Dorsolateral prefrontal cortex (tissue), 120 donors: ENCODE measurements at regions of chr18 and their contacts with region 1.

Region 1: GRCh38 chr18:4106407-4107033 is 348.6 kb downstream of the DLGAP1 start:
- DNase-seq: peak; percentile 61 to 88 (median 72)
- H3K4me3 ChIP-seq: peak overlapping the region; percentile 6 to 62 (median 46)
- H3K27ac ChIP-seq: peak overlapping the region in 34 of 59 donors; percentile 1 to 72 (median 46)
- H3K27me3 ChIP-seq: no peaks in the 10 kb centered on the region
- CTCF ChIP-seq: peak; percentile 82 to 97 (median 90)

Region 2: GRCh38 chr18:4236940-4237663 is 130.6 kb after region 1 on chr18:
- intact Hi-C with region 1: no loop called
- DNase-seq: no peak
- H3K4me3 ChIP-seq: no peak overlapping the region
- H3K27ac ChIP-seq: no peak overlapping the region
- H3K27me3 ChIP-seq: no peaks in the 10 kb centered on the region
- CTCF ChIP-seq: no peak

Region 3: DNA sequence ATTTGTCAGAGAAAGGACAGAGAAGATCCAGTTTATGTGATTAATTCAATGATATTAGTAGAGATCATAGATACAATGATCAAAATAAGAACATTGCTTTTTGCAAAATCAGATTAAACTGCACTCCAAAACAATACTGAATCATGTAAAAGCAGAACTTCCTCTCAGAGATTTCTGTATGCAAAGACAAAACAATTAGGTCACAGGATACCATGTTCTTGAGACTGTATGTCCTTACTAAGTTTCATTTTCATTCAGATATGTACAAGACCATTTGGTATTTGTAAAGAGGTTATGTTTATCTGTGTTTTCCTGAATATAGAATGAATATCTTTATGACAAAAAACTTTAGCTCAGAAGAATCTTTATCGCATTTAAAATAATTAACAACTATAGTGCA is 186.8 kb after region 1 on chr18:
- intact Hi-C with region 1: no loop called
- DNase-seq: no peak
- H3K4me3 ChIP-seq: no peak overlapping the region
- H3K27ac ChIP-seq: no peak overlapping the region
- H3K27me3 ChIP-seq: no peaks in the 10 kb centered on the region
- CTCF ChIP-seq: no peak

Region 4: GRCh38 chr18:5057386-5058348 is 951.1 kb after region 1 on chr18:
- intact Hi-C with region 1: loop called (anchors 5 kb)
- DNase-seq: peak; percentile 22 to 70 (median 58)
- H3K4me3 ChIP-seq: no peak overlapping the region
- H3K27ac ChIP-seq: no peak overlapping the region
- H3K27me3 ChIP-seq: no peaks in the 10 kb centered on the region
- CTCF ChIP-seq: peak; percentile 53 to 85 (median 77)